Naive thymus-derived CD4-positive, alpha-beta T cell (primary cell): ENCODE measurements at regions of chr4 and their contacts with region 1.

Region 1: DNA sequence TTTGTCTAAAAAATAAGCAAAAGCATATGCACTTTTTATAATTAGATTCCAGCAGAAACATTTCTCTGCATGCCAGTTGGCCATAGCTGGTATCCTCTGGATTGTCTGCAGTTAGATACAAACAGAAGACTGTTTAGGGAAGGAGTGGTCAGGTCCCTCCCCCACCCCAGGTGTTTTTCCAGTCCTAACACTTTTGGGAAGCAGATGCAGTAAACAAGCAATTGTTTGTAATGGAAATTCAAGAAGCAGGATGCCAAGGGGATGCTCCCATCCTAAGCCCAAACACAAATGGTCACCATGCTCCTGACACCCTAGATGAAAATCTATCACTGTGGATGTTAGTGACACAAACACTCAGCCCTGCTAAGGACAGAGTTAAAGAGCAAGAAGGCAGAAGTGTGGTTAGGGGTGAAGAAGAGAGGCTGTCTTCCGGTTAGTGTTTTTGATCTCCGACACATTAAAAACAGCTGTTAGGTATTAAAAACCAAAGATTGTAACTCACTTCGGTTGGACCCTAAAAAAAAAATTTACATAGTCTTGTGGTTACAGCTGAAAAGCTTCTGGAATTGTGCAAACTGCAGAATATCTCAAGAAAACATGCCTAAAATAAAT is 7.9 kb downstream of the LEF1 start:
- DNase-seq: peak in 6 of 9 donors; percentile 47 to 63 (median 51)
- ATAC-seq: peak; percentile 62
- H3K4me3 ChIP-seq: peak overlapping the region; percentile 77
- H3K4me3 Mint-ChIP-seq: peak overlapping the region; percentile 83 to 100 (median 97)
- H3K27ac ChIP-seq: peak overlapping the region; percentile 87
- H3K27ac Mint-ChIP-seq: peak overlapping the region; percentile 63 to 97 (median 92)
- H3K4me1 ChIP-seq: peaks cover 31 to 41% of the 10 kb centered on the region in 2 donors
- H3K4me1 Mint-ChIP-seq: peaks cover 12 to 70% (median 44%) of the 10 kb centered on the region in 7 donors
- H3K27me3 ChIP-seq: no peaks in the 10 kb centered on the region
- H3K27me3 Mint-ChIP-seq: peaks cover 0 to 4% (median 0%) of the 10 kb centered on the region in 5 donors

Region 2: DNA sequence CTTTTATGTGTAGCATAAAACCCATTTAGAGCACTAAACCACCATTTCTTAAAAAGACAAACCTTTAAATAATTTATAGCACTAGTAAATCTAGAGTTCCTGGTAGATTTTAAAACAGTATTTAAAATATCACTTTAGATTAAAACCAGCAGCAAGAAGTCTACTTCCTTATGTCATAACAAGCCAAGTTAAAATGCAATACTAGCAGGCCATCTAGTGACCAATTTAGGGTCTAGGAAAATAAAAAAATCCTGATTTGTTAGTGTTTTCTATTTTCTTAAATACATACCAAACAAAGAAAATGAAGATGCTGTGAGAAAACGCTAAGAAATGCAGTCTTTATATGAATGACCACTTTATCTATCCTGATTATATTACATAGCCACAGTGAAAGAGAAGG is 494.7 kb before region 1 on chr4:
- CTCF ChIA-PET with region 1: no interaction called
- POLR2A ChIA-PET with region 1: no interaction called
- intact Hi-C with region 1: no loop called
- DNase-seq: no peak
- ATAC-seq: no peak
- H3K4me3 ChIP-seq: no peak overlapping the region
- H3K4me3 Mint-ChIP-seq: no peak overlapping the region
- H3K27ac ChIP-seq: no peak overlapping the region
- H3K27ac Mint-ChIP-seq: no peak overlapping the region
- H3K4me1 ChIP-seq: no peaks in the 10 kb centered on the region
- H3K4me1 Mint-ChIP-seq: no peaks in the 10 kb centered on the region
- H3K27me3 ChIP-seq: no peaks in the 10 kb centered on the region
- H3K27me3 Mint-ChIP-seq: no peaks in the 10 kb centered on the region

Region 3: DNA sequence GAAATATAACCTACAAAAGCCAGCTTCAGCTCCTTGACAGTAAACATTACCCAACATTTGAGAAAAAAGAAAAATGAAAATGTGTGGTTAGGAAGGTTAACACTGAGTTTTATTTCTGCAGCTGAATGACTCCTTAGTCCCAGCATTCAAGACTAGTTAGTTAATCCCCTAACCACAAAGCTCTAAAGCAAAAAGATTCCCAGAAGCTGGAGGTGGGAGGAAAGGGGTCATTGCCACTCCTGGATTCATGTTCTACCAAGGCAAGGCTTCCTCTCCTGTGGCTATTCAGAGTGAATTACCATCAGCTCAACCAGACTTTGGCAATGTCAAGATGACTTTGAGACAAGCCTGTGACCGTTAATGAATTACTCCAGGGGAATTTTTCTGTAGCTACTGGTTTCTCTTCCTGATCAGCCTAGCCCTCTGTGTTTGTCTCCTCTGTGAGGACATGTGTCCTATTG is 107.6 kb before region 1 on chr4:
- CTCF ChIA-PET with region 1: interaction called, 3 read pairs
- POLR2A ChIA-PET with region 1: interaction called, 15 read pairs
- intact Hi-C with region 1: loop called in 1 of 2 experiments (anchors 1 kb)
- DNase-seq: no peak
- ATAC-seq: no peak
- H3K4me3 ChIP-seq: no peak overlapping the region
- H3K4me3 Mint-ChIP-seq: peak overlapping the region; percentile 36 to 84 (median 54)
- H3K27ac ChIP-seq: peak overlapping the region; percentile 66
- H3K27ac Mint-ChIP-seq: peak overlapping the region; percentile 82 to 99 (median 93)
- H3K4me1 ChIP-seq: peaks cover 15 to 82% of the 10 kb centered on the region in 2 donors
- H3K4me1 Mint-ChIP-seq: peaks cover 56 to 100% (median 94%) of the 10 kb centered on the region in 7 donors
- H3K27me3 ChIP-seq: no peaks in the 10 kb centered on the region
- H3K27me3 Mint-ChIP-seq: no peaks in the 10 kb centered on the region

Region 4: GRCh38 chr4:108080747-108081146 is 80.1 kb before region 1 on chr4:
- CTCF ChIA-PET with region 1: interaction called, 3 read pairs
- POLR2A ChIA-PET with region 1: interaction called, 17 read pairs
- intact Hi-C with region 1: no loop called
- DNase-seq: peak in 8 of 9 donors; percentile 21 to 85 (median 78)
- ATAC-seq: peak; percentile 90
- H3K4me3 ChIP-seq: peak overlapping the region; percentile 3
- H3K4me3 Mint-ChIP-seq: peak overlapping the region; percentile 75 to 89 (median 82)
- H3K27ac ChIP-seq: peak overlapping the region; percentile 71
- H3K27ac Mint-ChIP-seq: peak overlapping the region; percentile 83 to 98 (median 95)
- H3K4me1 ChIP-seq: peaks cover 0 to 53% of the 10 kb centered on the region in 2 donors
- H3K4me1 Mint-ChIP-seq: peaks cover 24 to 90% (median 75%) of the 10 kb centered on the region in 7 donors
- H3K27me3 ChIP-seq: no peaks in the 10 kb centered on the region
- H3K27me3 Mint-ChIP-seq: no peaks in the 10 kb centered on the region

Region 5: GRCh38 chr4:108118490-108118889 is 42.4 kb before region 1 on chr4:
- CTCF ChIA-PET with region 1: interaction called, 4 read pairs
- POLR2A ChIA-PET with region 1: interaction called, 160 read pairs
- intact Hi-C with region 1: loop called (anchors 1 kb)
- DNase-seq: peak in 1 of 9 donors; percentile 74
- ATAC-seq: peak; percentile 59
- H3K4me3 ChIP-seq: no peak overlapping the region
- H3K4me3 Mint-ChIP-seq: peak overlapping the region in 9 of 10 donors; percentile 57 to 89 (median 77)
- H3K27ac ChIP-seq: peak overlapping the region; percentile 80
- H3K27ac Mint-ChIP-seq: peak overlapping the region; percentile 84 to 98 (median 90)
- H3K4me1 ChIP-seq: peaks cover 58 to 97% of the 10 kb centered on the region in 2 donors
- H3K4me1 Mint-ChIP-seq: peaks cover 61 to 99% (median 97%) of the 10 kb centered on the region in 7 donors
- H3K27me3 ChIP-seq: no peaks in the 10 kb centered on the region
- H3K27me3 Mint-ChIP-seq: no peaks in the 10 kb centered on the region

Region 6: GRCh38 chr4:108141213-108141950 is 19.5 kb before region 1 on chr4:
- CTCF ChIA-PET with region 1: interaction called, 5 read pairs
- POLR2A ChIA-PET with region 1: interaction called, 31 read pairs
- intact Hi-C with region 1: loop called (anchors 1 to 2 kb)
- DNase-seq: peak in 1 of 9 donors; percentile 53
- ATAC-seq: no peak
- H3K4me3 ChIP-seq: peak overlapping the region; percentile 38
- H3K4me3 Mint-ChIP-seq: peak overlapping the region; percentile 79 to 91 (median 84)
- H3K27ac ChIP-seq: peak overlapping the region; percentile 81
- H3K27ac Mint-ChIP-seq: peak overlapping the region; percentile 85 to 98 (median 95)
- H3K4me1 ChIP-seq: peaks cover 26 to 97% of the 10 kb centered on the region in 2 donors
- H3K4me1 Mint-ChIP-seq: peaks cover 61 to 99% (median 95%) of the 10 kb centered on the region in 7 donors
- H3K27me3 ChIP-seq: no peaks in the 10 kb centered on the region
- H3K27me3 Mint-ChIP-seq: no peaks in the 10 kb centered on the region

Region 7: DNA sequence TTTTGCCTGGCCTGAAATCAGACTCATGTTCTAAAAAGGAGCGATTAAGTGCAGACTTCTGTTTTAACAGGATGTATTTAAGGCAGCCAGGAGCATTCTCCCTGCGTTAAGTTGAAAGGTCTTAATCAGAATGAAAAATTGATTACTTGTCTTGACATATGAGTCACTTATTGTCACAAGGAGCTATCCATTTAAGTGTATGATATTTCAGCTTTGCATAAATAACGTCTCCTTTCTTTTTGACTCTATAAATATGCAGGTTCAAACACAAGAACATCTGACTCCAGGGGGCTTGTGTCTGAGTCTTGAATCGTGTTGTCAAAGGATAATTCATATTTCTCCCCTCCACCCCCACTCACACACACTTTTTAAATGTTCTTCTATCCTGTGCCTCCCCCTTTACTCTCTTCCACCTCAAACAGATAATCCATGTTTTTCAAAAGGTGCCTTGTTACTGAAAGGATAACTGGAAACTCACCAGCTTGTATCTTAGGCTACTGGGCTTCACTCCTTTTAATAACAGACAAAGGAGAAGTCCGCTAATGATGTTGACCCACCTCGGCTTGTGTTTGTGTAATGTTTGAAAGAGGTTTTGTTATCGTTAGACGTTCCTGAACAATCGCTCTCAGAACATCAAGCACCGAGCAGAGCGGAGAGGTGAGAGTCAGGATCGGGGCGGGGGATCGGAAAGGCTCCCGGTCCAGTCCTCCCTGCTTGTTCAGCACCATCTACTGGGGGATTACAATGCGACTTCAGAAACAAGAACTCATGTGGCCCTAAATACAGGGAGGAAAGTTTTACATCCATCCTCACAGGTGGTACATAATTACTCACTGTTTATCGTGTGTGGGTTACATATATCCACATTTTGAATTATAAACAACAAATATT is 352.0 kb after region 1 on chr4:
- CTCF ChIA-PET with region 1: interaction called, 7 read pairs
- POLR2A ChIA-PET with region 1: no interaction called
- intact Hi-C with region 1: loop called (anchors 1 to 5 kb)
- DNase-seq: peak in 7 of 9 donors; percentile 42 to 68 (median 58)
- ATAC-seq: peak; percentile 82
- H3K4me3 ChIP-seq: peak overlapping the region; percentile 6
- H3K4me3 Mint-ChIP-seq: peak overlapping the region; percentile 72 to 87 (median 80)
- H3K27ac ChIP-seq: no peak overlapping the region
- H3K27ac Mint-ChIP-seq: peak overlapping the region in 7 of 9 donors; percentile 33 to 79 (median 71)
- H3K4me1 ChIP-seq: peaks cover 0 to 10% of the 10 kb centered on the region in 2 donors
- H3K4me1 Mint-ChIP-seq: peaks cover 9 to 37% (median 23%) of the 10 kb centered on the region in 7 donors
- H3K27me3 ChIP-seq: no peaks in the 10 kb centered on the region
- H3K27me3 Mint-ChIP-seq: peaks cover 0 to 11% (median 0%) of the 10 kb centered on the region in 5 donors